Endothelial cell of umbilical vein (primary cell): ENCODE measurements at regions of chr1 and their contacts with region 1.

Region 1: GRCh38 chr1:206575165-206575893 is 36.9 kb downstream of the EIF2D start:
- DNase-seq: peak; percentile 91
- H3K4me3 ChIP-seq: no peak overlapping the region
- H3K27ac ChIP-seq: peak overlapping the region; percentile 46
- H3K4me1 ChIP-seq: peaks cover 26% of the 10 kb centered on the region
- H3K27me3 ChIP-seq: no peaks in the 10 kb centered on the region
- CTCF ChIP-seq: no peak
- POLR2A ChIP-seq: no peak

Region 2: GRCh38 chr1:206489980-206490770 is 85.2 kb before region 1 on chr1:
- CTCF ChIA-PET with region 1: interaction called, 12 read pairs
- POLR2A ChIA-PET with region 1: no interaction called
- dilution Hi-C with region 1: no loop called
- intact Hi-C with region 1: no loop called
- DNase-seq: peak; percentile 59
- H3K4me3 ChIP-seq: no peak overlapping the region
- H3K27ac ChIP-seq: no peak overlapping the region
- H3K4me1 ChIP-seq: peaks cover 8% of the 10 kb centered on the region
- H3K27me3 ChIP-seq: no peaks in the 10 kb centered on the region
- CTCF ChIP-seq: peak; percentile 83 to 92
- POLR2A ChIP-seq: no peak

Region 3: DNA sequence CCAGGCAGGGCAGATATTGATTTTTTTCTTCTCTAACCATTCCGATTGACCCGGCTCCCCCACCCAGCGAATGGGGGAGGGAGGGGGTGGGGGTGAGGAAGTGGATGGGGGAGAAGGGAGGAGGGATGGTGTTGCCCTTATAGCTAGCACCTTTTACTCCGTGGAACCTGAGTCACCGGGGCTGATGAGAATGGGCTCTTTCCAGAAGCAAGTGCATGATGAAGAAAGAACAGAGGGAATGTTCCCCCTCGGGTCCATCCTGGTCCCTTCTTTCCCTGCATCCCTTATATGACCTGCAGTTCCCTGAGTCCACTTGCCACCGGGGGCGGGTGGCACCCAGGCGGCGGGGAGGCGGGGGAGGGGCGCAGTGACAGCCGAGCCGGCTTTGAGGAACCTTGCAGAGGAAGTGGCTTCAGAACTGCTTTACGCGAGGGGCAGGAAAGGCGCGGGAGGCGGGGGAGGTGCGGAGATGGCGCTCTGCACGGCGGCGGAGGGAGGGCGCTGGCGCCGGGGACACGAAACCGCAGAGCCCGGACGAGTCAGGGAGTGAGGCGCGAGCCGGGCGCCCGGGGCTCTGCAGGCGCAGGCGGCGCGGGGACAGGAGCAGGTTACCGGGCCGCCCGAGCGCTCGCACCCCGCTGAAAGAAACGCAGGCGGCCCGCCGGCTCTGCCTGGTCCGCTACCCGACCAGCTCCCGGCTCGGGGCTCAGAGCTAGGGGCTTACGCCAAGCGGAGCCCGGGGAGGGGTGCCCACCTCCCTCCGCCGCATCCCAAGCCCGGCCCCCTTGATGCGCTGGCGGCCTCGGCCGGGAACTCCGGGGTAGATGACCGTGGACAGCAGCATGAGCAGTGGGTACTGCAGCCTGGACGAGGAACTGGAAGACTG is 18.3 kb before region 1 on chr1:
- CTCF ChIA-PET with region 1: interaction called, 4 read pairs
- POLR2A ChIA-PET with region 1: no interaction called
- dilution Hi-C with region 1: no loop called
- intact Hi-C with region 1: loop called (anchors 2 kb)
- DNase-seq: peak; percentile 41
- H3K4me3 ChIP-seq: peak overlapping the region; percentile 36 to 53 (median 36)
- H3K27ac ChIP-seq: no peak overlapping the region
- H3K4me1 ChIP-seq: peaks cover 6% of the 10 kb centered on the region
- H3K27me3 ChIP-seq: peaks cover 30 to 33% of the 10 kb centered on the region in 2 experiments
- CTCF ChIP-seq: no peak
- POLR2A ChIP-seq: no peak